ENCODE measurements at regions of chr5 and their contacts with region 1.

Region 1: GRCh38 chr5:53766673-53767072 is 206.2 kb downstream of the NDUFS4 start:
- DNase-seq: no peak
- ATAC-seq: no peak
- H3K4me3 ChIP-seq: no peak overlapping the region
- H3K27ac ChIP-seq: no peak overlapping the region
- H3K4me1 ChIP-seq: no peaks in the 10 kb centered on the region
- H3K27me3 ChIP-seq: no peaks in the 10 kb centered on the region
- CTCF ChIP-seq: no peak

Region 2: DNA sequence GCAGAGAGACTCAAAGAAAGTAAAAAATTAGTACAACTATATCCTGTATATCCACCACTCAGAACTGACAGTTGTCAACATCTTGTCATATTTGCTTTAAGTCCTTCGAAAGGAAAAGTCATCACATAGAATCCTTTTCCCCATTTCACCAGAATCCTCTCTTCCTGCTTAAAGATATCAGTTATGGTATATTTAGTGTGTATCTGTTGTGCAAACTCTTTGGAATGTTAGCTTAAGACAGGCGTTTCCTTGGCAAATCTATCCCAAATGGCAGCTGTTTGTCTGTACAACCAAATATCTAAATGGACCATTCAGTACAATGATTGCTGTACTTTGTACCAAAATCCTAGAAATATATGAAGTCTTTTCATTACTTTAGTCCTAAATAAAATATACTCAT is 880.5 kb before region 1 on chr5:
- intact Hi-C with region 1: loop called in 1 of 10 experiments (anchors 5 kb)
- DNase-seq: no peak
- ATAC-seq: no peak
- H3K4me3 ChIP-seq: no peak overlapping the region
- H3K27ac ChIP-seq: no peak overlapping the region
- H3K4me1 ChIP-seq: no peaks in the 10 kb centered on the region
- H3K27me3 ChIP-seq: no peaks in the 10 kb centered on the region
- CTCF ChIP-seq: no peak

Region 3: DNA sequence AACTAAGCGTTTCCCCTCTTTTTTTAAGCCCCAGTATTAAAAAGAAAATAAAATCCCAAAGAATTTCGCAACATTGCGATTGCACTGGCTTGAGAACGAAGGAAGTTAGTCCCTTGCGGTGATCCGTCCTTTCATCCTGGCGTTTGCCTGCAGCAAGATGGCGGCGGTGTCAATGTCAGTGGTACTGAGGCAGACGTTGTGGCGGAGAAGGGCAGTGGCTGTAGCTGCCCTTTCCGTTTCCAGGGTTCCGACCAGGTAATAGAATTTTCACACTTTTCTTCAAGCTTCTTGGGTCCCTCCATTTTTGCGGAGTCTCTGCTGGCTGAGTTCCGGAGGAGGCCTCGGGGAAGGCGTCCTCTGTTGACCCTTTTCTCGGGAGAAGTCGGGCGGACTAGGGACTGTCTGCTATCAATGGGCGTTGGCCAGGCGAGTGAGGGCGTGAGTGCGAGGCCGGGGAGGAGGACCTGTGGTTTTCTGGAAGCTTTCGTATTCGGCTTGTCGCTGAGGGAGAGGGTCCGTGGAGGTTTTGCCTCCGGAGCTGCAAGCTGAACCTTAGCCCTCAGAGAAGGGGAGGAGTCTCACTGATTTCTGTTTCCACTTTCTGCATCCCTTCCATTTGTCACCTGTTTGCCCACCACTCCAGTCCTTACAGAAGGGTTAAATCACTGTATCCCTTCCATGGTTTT is 206.0 kb before region 1 on chr5 and contains the start of gene NDUFS4:
- intact Hi-C with region 1: no loop called
- DNase-seq: peak; percentile 77 to 95
- ATAC-seq: peak; percentile 95 to 98 (median 96)
- H3K4me3 ChIP-seq: peak within 1 kb of the TSS; percentile 69 to 96 (median 81)
- H3K27ac ChIP-seq: peak within 1 kb of the TSS; percentile 81 to 97 (median 92)
- H3K4me1 ChIP-seq: peaks cover 4 to 42% (median 25%) of the 10 kb centered on the region in 9 donors
- H3K27me3 ChIP-seq: peaks cover 0 to 21% (median 0%) of the 10 kb centered on the region in 7 donors
- CTCF ChIP-seq: peak in 2 of 9 donors; percentile 23 to 30
- total RNA-seq, gene NDUFS4: 156 to 268 (median 213) TPM

Region 4: DNA sequence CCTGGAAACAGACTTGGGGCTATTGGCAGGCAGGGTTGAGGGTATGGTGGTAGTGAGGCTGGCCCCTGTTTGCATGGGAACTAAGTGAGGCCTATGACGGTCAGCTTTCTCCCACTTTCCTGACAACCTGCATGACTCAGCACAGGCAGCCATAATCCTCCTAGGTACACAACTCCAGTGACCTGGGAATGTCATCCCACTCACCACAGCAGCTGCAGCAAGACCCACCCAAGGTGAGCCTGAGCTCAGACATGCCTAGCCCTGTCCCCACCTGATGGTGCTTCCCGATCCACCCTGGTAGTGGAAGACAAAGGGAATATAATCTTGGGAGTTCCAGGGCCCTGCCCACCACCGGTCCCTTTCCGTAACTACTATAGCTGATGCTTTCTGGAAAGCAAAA is 27.6 kb before region 1 on chr5:
- intact Hi-C with region 1: no loop called
- DNase-seq: no peak
- ATAC-seq: no peak
- H3K4me3 ChIP-seq: no peak overlapping the region
- H3K27ac ChIP-seq: no peak overlapping the region
- H3K4me1 ChIP-seq: no peaks in the 10 kb centered on the region
- H3K27me3 ChIP-seq: no peaks in the 10 kb centered on the region
- CTCF ChIP-seq: no peak